CD8-positive, alpha-beta memory T cell (primary cell): ENCODE measurements at regions of chr6 and their contacts with region 1.

Region 1: GRCh38 chr6:692855-693722 is at the start of gene EXOC2:
- DNase-seq: peak; percentile 75 to 89 (median 79)
- H3K4me3 ChIP-seq: peak within 1 kb of the TSS; percentile 94
- H3K4me3 Mint-ChIP-seq: peak within 1 kb of the TSS; percentile 91 to 98 (median 96)
- H3K27ac ChIP-seq: peak within 1 kb of the TSS; percentile 83
- H3K27ac Mint-ChIP-seq: peak within 1 kb of the TSS; percentile 84 to 100 (median 96)
- H3K4me1 ChIP-seq: peaks cover 20% of the 10 kb centered on the region
- H3K4me1 Mint-ChIP-seq: peaks cover 12 to 31% (median 26%) of the 10 kb centered on the region in 3 donors
- H3K27me3 ChIP-seq: no peaks in the 10 kb centered on the region
- H3K27me3 Mint-ChIP-seq: no peaks in the 10 kb centered on the region
- total RNA-seq, gene EXOC2: 43.1 to 44.6 TPM

Region 2: DNA sequence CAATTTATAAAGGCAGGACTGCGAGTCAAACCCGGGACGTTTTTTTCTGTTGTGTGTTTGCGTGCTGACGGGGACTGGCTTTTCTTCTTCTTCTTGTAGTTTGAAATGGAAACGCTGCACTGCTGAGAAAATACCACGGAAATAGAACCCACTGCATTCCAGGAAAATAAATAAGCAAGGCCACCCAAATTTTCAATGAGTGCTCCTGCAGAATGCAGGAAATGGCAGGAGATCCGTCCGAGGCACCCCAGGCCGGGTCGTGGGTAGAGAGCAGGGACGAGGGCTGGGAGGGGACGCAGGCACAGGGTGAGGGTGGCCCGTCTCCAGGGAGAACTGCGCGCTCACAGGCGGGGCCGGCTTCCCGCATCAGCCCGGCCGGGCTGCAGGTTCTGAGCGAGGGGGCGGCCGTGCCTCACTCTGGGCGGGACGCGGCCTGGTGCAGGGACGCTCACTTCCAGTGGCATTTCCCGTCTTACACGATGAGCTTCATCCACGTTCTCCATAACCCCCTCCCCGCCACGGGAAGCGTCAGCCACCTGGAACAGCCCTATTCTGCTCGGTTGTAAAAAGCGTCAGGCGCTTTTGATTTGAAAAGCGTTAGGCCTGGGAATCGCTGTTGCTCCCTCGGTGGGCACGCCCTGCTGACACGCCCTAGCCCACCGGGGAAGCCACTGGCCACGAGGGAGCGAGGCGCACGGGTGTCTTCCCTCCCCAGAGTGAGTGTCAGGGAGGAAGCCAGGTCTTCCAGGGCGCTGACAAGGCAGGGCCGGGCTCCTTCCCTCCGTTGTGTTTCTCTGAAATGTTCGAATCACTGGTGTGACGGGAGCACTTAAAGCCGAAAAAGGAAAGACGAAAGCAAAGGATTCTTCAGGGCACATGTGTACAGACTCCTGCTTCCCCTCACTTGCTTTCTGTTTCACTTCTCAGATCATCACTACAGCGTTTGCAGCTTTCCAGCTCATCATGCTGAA is 17.8 kb after region 1 on chr6:
- CTCF ChIA-PET with region 1: interaction called, 8 read pairs
- POLR2A ChIA-PET with region 1: interaction called, 19 read pairs
- DNase-seq: peak; percentile 34 to 61 (median 55)
- H3K4me3 ChIP-seq: peak overlapping the region; percentile 74
- H3K4me3 Mint-ChIP-seq: peak overlapping the region; percentile 97 to 100 (median 99)
- H3K27ac ChIP-seq: peak overlapping the region; percentile 84
- H3K27ac Mint-ChIP-seq: peak overlapping the region; percentile 92 to 100 (median 99)
- H3K4me1 ChIP-seq: peaks cover 10% of the 10 kb centered on the region
- H3K4me1 Mint-ChIP-seq: peaks cover 20 to 23% (median 21%) of the 10 kb centered on the region in 3 donors
- H3K27me3 ChIP-seq: no peaks in the 10 kb centered on the region
- H3K27me3 Mint-ChIP-seq: peaks cover 2 to 9% of the 10 kb centered on the region in 2 donors